Psoas muscle (tissue), 8 donors: ENCODE measurements at regions of chr12 and their contacts with region 1.

Region 1: DNA sequence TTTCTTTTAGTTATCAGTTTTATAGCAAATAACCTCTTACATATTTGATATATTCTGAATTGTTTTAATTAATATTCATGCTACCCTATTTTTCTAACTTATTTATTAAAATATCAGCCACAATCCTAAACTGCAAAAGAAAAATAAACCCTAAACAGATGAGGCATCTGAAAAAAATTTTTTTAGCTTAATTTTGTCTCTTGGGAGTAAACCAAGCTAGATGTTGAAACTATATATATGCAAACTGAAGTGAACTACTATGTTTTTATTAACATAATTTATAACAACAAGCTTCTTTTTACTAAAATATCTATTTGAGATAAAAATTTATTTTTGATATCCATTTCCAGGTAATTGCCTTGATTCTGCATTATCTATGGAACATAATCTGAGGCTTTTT is 87.6 kb downstream of the PTPRQ start:
- DNase-seq: no peak
- ATAC-seq: no peak
- H3K4me3 ChIP-seq: no peak overlapping the region
- H3K27ac ChIP-seq: no peak overlapping the region
- H3K4me1 ChIP-seq: no peaks in the 10 kb centered on the region
- H3K27me3 ChIP-seq: no peaks in the 10 kb centered on the region
- CTCF ChIP-seq: no peak

Region 2: GRCh38 chr12:79973801-79974200 is 557.8 kb before region 1 on chr12:
- intact Hi-C with region 1: no loop called
- DNase-seq: no peak
- ATAC-seq: no peak
- H3K4me3 ChIP-seq: no peak overlapping the region
- H3K27ac ChIP-seq: no peak overlapping the region
- H3K4me1 ChIP-seq: no peaks in the 10 kb centered on the region
- H3K27me3 ChIP-seq: no peaks in the 10 kb centered on the region
- CTCF ChIP-seq: no peak

Region 3: GRCh38 chr12:80485222-80485987 is 46.2 kb before region 1 on chr12:
- intact Hi-C with region 1: no loop called
- DNase-seq: no peak
- ATAC-seq: no peak
- H3K4me3 ChIP-seq: no peak overlapping the region
- H3K27ac ChIP-seq: no peak overlapping the region
- H3K4me1 ChIP-seq: no peaks in the 10 kb centered on the region
- H3K27me3 ChIP-seq: no peaks in the 10 kb centered on the region
- CTCF ChIP-seq: no peak

Region 4: GRCh38 chr12:80598004-80598606 is 66.5 kb after region 1 on chr12:
- intact Hi-C with region 1: loop called in 1 of 2 experiments (anchors 10 kb)
- DNase-seq: no peak
- ATAC-seq: no peak
- H3K4me3 ChIP-seq: no peak overlapping the region
- H3K27ac ChIP-seq: no peak overlapping the region
- H3K4me1 ChIP-seq: no peaks in the 10 kb centered on the region
- H3K27me3 ChIP-seq: no peaks in the 10 kb centered on the region
- CTCF ChIP-seq: no peak

Region 5: DNA sequence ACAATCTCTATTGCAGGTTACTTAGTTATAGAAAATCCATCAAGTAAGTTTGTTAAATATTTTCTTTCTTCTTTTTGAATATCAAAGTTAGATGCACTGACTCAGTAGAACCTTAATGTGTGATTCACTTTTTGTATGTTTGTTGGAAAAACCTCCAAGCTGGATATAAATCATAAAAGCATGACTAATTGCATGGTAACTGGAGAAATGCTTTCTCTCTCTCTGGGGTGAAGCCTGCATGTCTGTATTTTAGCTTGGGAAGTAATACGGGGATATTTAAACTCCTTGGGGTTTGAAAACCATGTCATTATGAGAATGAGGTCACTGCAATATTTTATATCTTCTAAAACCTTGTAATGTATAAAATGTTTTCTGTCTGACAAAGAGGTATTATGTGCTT is 117.2 kb after region 1 on chr12:
- intact Hi-C with region 1: no loop called
- DNase-seq: no peak
- ATAC-seq: peak in 1 of 4 donors; percentile 61
- H3K4me3 ChIP-seq: no peak overlapping the region
- H3K27ac ChIP-seq: no peak overlapping the region
- H3K4me1 ChIP-seq: peaks cover 20% of the 10 kb centered on the region
- H3K27me3 ChIP-seq: no peaks in the 10 kb centered on the region
- CTCF ChIP-seq: no peak

Region 6: DNA sequence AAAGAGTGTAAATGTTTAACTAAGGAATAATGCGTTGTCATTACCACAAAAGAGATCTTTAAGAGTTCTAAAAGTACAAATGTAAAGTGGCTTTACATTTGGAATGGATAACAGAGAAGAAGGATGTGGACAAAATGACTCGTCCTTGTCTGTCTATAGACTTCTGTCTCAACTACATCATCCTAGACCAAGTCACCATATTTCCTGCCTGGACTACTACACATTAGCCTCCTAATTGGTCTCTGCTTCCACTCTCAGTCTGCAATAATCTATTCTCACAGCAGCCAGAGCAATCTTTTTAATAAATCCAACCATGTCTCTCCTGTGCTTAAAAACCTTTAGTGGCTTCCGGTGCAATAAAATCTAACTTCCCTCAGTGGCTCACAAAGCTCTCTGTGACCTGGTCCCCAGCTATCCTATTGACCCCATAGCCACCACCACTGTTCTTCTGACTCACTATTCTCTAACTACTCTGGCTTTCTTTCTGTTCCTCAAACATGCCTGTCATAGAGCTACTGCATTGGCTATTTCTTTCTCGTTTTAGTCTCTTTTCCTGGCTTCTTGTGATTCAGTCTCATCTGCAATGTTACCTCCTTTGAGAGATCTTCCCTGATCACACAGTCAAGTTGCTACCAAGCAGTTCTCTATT is 276.1 kb after region 1 on chr12:
- intact Hi-C with region 1: no loop called
- DNase-seq: no peak
- ATAC-seq: no peak
- H3K4me3 ChIP-seq: no peak overlapping the region
- H3K27ac ChIP-seq: no peak overlapping the region
- H3K4me1 ChIP-seq: no peaks in the 10 kb centered on the region
- H3K27me3 ChIP-seq: no peaks in the 10 kb centered on the region
- CTCF ChIP-seq: no peak